Naive thymus-derived CD4-positive, alpha-beta T cell (primary cell): ENCODE measurements at regions of chr17 and their contacts with region 1.

Region 1: DNA sequence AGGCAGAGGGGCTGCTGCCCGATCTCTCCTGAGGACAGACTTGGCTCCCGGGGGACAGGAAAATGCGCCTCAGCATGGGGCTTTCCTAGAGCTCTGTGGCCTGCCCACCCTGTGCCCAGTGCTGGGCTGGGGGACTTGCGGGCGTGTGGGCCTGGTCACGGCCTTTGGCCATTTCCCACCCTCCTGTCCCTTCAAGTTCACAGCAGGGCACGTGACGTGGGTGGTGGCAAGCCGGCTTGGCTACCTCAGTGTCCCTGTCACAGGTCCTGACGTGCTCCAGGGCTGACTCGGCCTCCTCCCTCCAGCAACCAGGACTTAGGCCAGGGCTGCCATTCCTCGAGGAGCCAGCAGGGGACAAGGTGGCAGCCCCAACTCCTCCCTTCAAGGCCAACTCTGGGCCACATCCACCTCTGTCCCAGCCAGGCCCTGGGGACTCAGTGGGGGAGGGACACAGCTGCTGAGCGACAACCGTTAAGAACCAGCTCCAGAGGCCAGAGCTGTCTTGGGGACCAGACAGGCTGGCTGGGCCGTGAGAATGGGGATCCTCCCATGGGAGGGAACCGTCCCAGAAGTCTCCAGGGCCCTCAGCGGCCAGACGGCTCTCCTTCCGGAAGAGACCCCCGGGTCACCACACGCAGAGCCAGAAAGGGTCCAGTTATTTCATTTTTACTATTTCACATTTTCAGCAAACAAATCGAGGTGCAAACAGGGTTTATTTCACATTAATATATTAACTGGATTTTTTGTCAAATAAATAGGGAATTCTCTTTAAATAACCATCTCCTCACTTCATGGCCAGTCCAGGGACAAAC is 1.1 kb upstream of the UNC13D start:
- DNase-seq: peak in 7 of 9 donors; percentile 41 to 67 (median 46)
- ATAC-seq: peak; percentile 68
- H3K4me3 ChIP-seq: no peak overlapping the region
- H3K4me3 Mint-ChIP-seq: peak overlapping the region in 9 of 10 donors; percentile 34 to 93 (median 53)
- H3K27ac ChIP-seq: peak overlapping the region; percentile 97
- H3K27ac Mint-ChIP-seq: peak overlapping the region in 8 of 9 donors; percentile 28 to 98 (median 66)
- H3K4me1 ChIP-seq: peaks cover 21 to 30% of the 10 kb centered on the region in 2 donors
- H3K4me1 Mint-ChIP-seq: peaks cover 4 to 36% (median 19%) of the 10 kb centered on the region in 7 donors
- H3K27me3 ChIP-seq: no peaks in the 10 kb centered on the region
- H3K27me3 Mint-ChIP-seq: no peaks in the 10 kb centered on the region

Region 2: DNA sequence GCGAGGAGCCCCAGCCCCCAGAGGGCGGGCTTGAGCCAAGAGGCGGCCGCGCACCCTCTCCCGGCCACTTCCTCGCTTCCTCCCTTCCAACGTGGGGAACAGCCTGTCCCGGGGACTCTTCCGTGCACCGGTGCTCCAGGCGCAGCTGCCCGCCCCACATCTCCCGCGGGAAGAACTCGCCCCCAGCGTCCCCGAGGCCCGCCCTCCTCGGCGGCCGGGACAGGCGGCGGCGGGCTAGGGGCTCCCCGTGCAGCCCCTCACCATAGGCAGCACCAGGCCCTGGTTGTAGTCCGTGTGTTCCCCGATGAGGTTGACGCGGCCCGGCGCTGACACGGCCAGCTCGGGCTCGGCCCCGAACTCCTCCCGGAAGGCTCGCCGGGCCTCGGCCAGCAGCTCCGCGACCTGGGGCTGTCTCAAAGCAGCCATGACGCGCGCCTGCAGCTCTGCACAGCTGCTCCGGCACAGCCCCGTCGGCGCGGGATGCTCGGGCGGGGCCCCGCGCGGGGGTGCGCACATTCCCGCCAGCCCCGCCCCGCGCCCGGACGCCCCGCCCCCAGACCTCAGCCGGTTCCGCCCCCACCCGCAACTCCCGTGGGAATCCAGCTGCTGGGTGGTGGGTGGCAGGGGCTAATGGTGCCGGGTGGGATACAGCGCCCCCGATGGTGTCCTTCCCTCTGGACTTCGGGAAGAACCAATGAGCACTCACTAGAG is 80.4 kb before region 1 on chr17 and contains the start of gene GALK1:
- CTCF ChIA-PET with region 1: interaction called, 8 read pairs
- POLR2A ChIA-PET with region 1: interaction called, 7 read pairs
- intact Hi-C with region 1: loop called in 1 of 2 experiments (anchors 1 kb)
- DNase-seq: peak; percentile 56 to 78 (median 67)
- ATAC-seq: peak; percentile 97
- H3K4me3 ChIP-seq: peak within 1 kb of the TSS; percentile 71
- H3K4me3 Mint-ChIP-seq: peak within 1 kb of the TSS; percentile 62 to 84 (median 75)
- H3K27ac ChIP-seq: peak within 1 kb of the TSS; percentile 67
- H3K27ac Mint-ChIP-seq: peak within 1 kb of the TSS; percentile 32 to 87 (median 70)
- H3K4me1 ChIP-seq: peaks cover 11% of the 10 kb centered on the region in 2 donors
- H3K4me1 Mint-ChIP-seq: peaks cover 0 to 21% (median 10%) of the 10 kb centered on the region in 7 donors
- H3K27me3 ChIP-seq: no peaks in the 10 kb centered on the region
- H3K27me3 Mint-ChIP-seq: no peaks in the 10 kb centered on the region
- total RNA-seq, gene GALK1: 9.9 to 42.9 (median 22.1) TPM

Region 3: DNA sequence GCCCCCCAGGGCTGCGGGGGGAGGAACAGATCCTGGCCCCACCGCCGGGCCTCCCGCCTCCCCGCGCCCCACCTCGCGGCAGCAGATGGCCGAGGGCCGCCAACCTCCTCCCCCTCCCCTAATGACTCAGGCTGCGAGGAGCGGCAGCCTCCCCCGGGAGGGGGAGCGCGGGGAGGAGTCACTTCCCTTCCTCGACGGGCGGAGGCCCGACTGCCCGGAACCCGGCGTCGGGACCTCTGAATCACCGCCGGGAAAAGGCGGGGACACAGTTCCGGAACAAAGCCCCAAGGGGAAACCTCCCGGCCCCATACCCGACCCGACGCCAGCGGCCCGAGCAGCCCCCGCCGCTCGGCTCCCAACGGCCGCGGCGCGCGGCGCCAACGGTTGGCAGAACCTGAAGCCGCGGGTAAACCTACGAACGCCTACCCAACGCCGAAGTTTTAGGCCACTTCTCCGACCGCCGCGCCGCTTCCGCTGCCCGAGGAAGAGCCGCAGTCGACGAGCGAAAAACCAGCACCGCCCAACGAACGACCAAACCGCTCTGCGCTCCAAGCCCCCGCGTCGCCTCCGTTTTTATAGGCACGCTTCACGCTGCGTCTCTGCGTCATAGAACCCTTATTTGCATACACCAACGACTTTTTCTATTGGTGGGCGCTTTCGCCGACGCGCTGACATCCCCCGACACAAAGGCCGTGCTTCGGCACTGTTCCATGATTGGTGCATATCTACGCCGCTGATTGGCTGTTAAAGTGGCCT is 65.8 kb before region 1 on chr17:
- CTCF ChIA-PET with region 1: interaction called, 4 read pairs
- POLR2A ChIA-PET with region 1: interaction called, 238 read pairs
- intact Hi-C with region 1: loop called (anchors 1 to 5 kb)
- DNase-seq: peak; percentile 84 to 99 (median 96)
- ATAC-seq: peak; percentile 79
- H3K4me3 ChIP-seq: peak overlapping the region; percentile 85
- H3K4me3 Mint-ChIP-seq: peak overlapping the region; percentile 83 to 100 (median 98)
- H3K27ac ChIP-seq: peak overlapping the region; percentile 98
- H3K27ac Mint-ChIP-seq: peak overlapping the region; percentile 89 to 100 (median 99)
- H3K4me1 ChIP-seq: peaks cover 31 to 35% of the 10 kb centered on the region in 2 donors
- H3K4me1 Mint-ChIP-seq: peaks cover 19 to 68% (median 56%) of the 10 kb centered on the region in 7 donors
- H3K27me3 ChIP-seq: no peaks in the 10 kb centered on the region
- H3K27me3 Mint-ChIP-seq: peaks cover 0 to 3% (median 0%) of the 10 kb centered on the region in 5 donors

Region 4: DNA sequence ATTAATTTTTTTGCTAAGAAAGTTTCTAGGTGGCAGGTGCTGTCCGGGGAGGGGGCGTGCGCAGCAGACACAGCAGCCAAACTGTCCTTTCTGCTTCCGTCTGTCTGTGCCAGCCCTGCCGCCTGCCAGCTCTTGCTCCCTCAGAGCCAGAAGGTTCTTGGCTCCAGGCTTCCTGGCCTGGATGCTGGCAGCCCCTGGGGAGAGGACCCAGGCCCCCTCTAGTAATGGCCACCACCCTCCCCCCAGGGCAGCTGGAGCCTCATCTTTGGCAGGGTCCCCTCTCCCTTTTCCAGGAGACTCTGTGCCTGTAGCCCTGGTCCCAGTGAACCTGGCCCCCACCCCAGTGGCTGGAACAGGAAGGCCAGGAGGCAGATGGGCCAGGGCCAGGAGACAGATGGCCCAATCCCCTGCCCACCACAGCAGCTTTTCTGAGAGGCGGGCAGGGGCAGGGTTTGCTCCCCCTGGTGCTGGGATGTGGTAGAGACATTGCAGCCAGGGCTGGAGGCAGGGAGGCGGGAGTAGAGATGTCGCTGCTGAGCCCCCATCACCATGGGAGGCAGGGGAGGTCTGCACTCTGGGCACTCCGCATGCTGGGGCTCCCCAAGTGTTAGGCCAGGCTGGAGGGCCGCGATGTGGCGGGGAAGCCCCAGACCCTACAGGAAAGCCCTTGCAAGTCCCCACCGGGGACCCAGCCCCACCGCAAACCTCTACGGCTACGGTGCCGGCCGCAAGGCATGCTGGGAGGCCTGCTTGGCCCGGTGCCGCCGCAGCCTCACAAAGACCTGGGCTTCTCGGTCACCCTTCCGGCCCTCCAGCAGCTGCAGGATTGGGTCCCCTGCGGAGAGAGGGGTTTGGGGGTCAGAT is 17.8 kb before region 1 on chr17:
- CTCF ChIA-PET with region 1: interaction called, 17 read pairs
- POLR2A ChIA-PET with region 1: interaction called, 38 read pairs
- intact Hi-C with region 1: loop called in 1 of 2 experiments (anchors 1 kb)
- DNase-seq: peak; percentile 41 to 66 (median 61)
- ATAC-seq: peak; percentile 76
- H3K4me3 ChIP-seq: peak overlapping the region; percentile 30
- H3K4me3 Mint-ChIP-seq: peak overlapping the region; percentile 37 to 74 (median 56)
- H3K27ac ChIP-seq: peak overlapping the region; percentile 67
- H3K27ac Mint-ChIP-seq: peak overlapping the region; percentile 6 to 91 (median 76)
- H3K4me1 ChIP-seq: peaks cover 8% of the 10 kb centered on the region in 2 donors
- H3K4me1 Mint-ChIP-seq: peaks cover 5 to 16% (median 11%) of the 10 kb centered on the region in 7 donors
- H3K27me3 ChIP-seq: no peaks in the 10 kb centered on the region
- H3K27me3 Mint-ChIP-seq: no peaks in the 10 kb centered on the region

Region 5: DNA sequence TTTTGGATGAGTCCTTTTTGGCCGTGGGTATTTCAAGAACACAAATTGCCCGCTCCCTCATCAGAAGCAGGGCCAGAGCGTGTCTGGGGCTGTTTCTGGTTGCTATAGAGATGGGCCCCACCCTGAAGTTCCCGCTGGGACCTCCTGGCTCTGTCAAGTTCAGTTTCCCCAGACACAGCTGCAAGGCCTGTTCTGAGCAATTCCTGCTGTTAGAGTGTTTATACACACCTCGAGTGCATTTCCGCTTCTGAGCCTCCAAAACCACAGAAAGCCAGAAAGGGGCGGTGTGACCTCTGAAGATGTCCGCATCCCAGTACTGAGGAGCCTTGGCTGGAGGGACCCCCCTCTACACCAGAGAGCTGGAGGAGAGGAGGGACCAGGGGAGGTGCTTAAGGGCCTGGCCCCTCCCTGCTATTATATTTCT is 19.2 kb after region 1 on chr17:
- CTCF ChIA-PET with region 1: interaction called, 4 read pairs
- POLR2A ChIA-PET with region 1: interaction called, 13 read pairs
- intact Hi-C with region 1: loop called in 1 of 2 experiments (anchors 2 kb)
- DNase-seq: peak in 4 of 9 donors; percentile 34 to 54 (median 38)
- ATAC-seq: peak; percentile 70
- H3K4me3 ChIP-seq: no peak overlapping the region
- H3K4me3 Mint-ChIP-seq: peak overlapping the region in 6 of 10 donors; percentile 8 to 72 (median 50)
- H3K27ac ChIP-seq: peak overlapping the region; percentile 49
- H3K27ac Mint-ChIP-seq: peak overlapping the region; percentile 48 to 93 (median 84)
- H3K4me1 ChIP-seq: peaks cover 11 to 18% of the 10 kb centered on the region in 2 donors
- H3K4me1 Mint-ChIP-seq: peaks cover 10 to 29% (median 22%) of the 10 kb centered on the region in 7 donors
- H3K27me3 ChIP-seq: no peaks in the 10 kb centered on the region
- H3K27me3 Mint-ChIP-seq: no peaks in the 10 kb centered on the region

Region 6: GRCh38 chr17:75877752-75878173 is 32.5 kb after region 1 on chr17:
- CTCF ChIA-PET with region 1: interaction called, 8 read pairs
- POLR2A ChIA-PET with region 1: interaction called, 12 read pairs
- intact Hi-C with region 1: loop called in 1 of 2 experiments (anchors 1 kb)
- DNase-seq: peak; percentile 56 to 77 (median 69)
- ATAC-seq: peak; percentile 89
- H3K4me3 ChIP-seq: peak overlapping the region; percentile 74
- H3K4me3 Mint-ChIP-seq: peak overlapping the region; percentile 83 to 99 (median 90)
- H3K27ac ChIP-seq: peak overlapping the region; percentile 70
- H3K27ac Mint-ChIP-seq: peak overlapping the region; percentile 67 to 97 (median 89)
- H3K4me1 ChIP-seq: peaks cover 25 to 30% of the 10 kb centered on the region in 2 donors
- H3K4me1 Mint-ChIP-seq: peaks cover 28 to 57% (median 50%) of the 10 kb centered on the region in 7 donors
- H3K27me3 ChIP-seq: no peaks in the 10 kb centered on the region
- H3K27me3 Mint-ChIP-seq: peaks cover 0 to 28% (median 0%) of the 10 kb centered on the region in 5 donors

Region 7: GRCh38 chr17:75896415-75897159 is 51.3 kb after region 1 on chr17 and contains the start of gene TRIM65:
- CTCF ChIA-PET with region 1: interaction called, 5 read pairs
- POLR2A ChIA-PET with region 1: interaction called, 41 read pairs
- intact Hi-C with region 1: loop called in 1 of 2 experiments (anchors 1 kb)
- DNase-seq: peak; percentile 63 to 87 (median 71)
- ATAC-seq: peak; percentile 91
- H3K4me3 ChIP-seq: peak within 1 kb of the TSS; percentile 65
- H3K4me3 Mint-ChIP-seq: peak within 1 kb of the TSS; percentile 55 to 92 (median 84)
- H3K27ac ChIP-seq: peak within 1 kb of the TSS; percentile 75
- H3K27ac Mint-ChIP-seq: peak within 1 kb of the TSS; percentile 66 to 91 (median 85)
- H3K4me1 ChIP-seq: peaks cover 8 to 12% of the 10 kb centered on the region in 2 donors
- H3K4me1 Mint-ChIP-seq: peaks cover 22 to 32% (median 26%) of the 10 kb centered on the region in 7 donors
- H3K27me3 ChIP-seq: no peaks in the 10 kb centered on the region
- H3K27me3 Mint-ChIP-seq: no peaks in the 10 kb centered on the region
- total RNA-seq, gene TRIM65: 20.9 to 37.7 (median 29.6) TPM

Region 8: GRCh38 chr17:75914643-75915267 is 69.5 kb after region 1 on chr17:
- CTCF ChIA-PET with region 1: no interaction called
- POLR2A ChIA-PET with region 1: no interaction called
- intact Hi-C with region 1: no loop called
- DNase-seq: no peak
- ATAC-seq: no peak
- H3K4me3 ChIP-seq: no peak overlapping the region
- H3K4me3 Mint-ChIP-seq: no peak overlapping the region
- H3K27ac ChIP-seq: no peak overlapping the region
- H3K27ac Mint-ChIP-seq: no peak overlapping the region
- H3K4me1 ChIP-seq: no peaks in the 10 kb centered on the region
- H3K4me1 Mint-ChIP-seq: peaks cover 0 to 6% (median 4%) of the 10 kb centered on the region in 7 donors
- H3K27me3 ChIP-seq: no peaks in the 10 kb centered on the region
- H3K27me3 Mint-ChIP-seq: no peaks in the 10 kb centered on the region